Aorta (tissue), 5 donors: ENCODE measurements at regions of chrX and their contacts with region 1.

Region 1: DNA sequence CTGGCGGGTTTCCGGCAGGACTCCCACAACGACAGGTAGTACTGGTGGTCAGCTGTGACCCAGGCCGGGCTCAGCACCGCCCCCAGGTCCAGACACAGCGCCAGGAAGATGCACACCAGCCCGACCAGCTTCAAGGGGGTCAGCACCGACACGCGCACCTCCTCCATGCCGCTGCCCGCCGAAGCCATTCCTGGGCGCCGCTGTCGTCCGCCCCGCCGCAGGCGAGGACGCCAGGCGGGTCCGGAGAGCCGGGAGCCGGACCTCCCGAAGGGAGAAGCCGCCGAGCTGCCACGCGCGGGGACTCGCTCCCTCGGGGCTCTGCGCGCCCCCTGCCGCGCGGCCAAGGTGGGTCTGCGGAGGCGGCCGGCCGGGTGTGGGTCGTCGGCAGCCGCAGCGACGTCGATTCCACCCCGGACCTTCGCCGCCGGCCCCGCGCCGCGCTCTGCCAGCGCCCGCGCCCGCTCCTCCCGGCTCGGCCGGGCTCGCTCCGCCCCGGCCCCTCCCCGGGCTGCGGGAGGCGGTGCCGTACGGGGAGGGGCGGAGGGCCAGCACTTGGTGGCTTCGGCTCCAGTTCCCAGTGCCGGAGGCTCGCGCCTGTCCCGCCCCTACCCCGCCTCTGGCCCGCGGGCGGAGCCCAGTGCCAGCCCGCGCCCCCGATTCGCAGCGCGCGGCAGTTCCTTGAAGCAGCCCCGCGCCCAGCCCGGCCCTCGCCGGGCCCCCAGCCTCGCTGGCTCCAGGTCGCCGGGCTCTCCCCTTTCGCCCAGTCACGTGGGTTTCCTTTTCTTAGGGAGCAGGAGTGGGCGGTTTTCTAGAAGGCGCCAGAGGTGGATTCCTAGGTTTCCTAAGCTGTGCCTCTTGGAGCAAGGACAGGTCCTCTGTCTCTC is at the start of gene TMEM47:
- DNase-seq: peak; percentile 80 to 90
- ATAC-seq: peak; percentile 93
- H3K4me3 ChIP-seq: peak within 1 kb of the TSS; percentile 89 to 92
- H3K27ac ChIP-seq: peak within 1 kb of the TSS in 1 of 2 donors; percentile 86
- H3K4me1 ChIP-seq: no peaks in the 10 kb centered on the region
- H3K27me3 ChIP-seq: no peaks in the 10 kb centered on the region
- total RNA-seq, gene TMEM47: 123 to 287 TPM

Region 2: DNA sequence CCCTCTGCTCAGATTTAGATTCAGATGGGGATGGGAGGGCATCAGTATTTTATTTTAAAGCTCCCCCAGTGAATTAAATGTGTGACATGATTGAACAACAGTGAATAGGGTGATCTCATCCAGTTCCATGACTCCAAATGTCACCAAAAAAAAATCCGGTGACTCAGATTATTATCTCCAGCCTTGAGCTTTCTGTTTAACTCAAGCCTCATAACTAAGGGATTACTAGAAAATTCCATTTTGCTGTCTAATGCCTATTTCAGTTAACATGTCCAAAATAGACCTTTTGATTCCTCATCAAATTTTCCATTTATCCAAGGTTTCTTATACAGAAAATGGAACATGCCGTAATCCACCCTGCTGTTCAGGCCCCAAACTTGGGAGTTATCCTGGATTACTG is 121.9 kb after region 1 on chrX:
- intact Hi-C with region 1: loop called in 1 of 2 experiments (anchors 5 kb)
- DNase-seq: no peak
- ATAC-seq: peak; percentile 50
- H3K4me3 ChIP-seq: no peak overlapping the region
- H3K27ac ChIP-seq: peak overlapping the region in 1 of 2 donors; percentile 57
- H3K4me1 ChIP-seq: no peaks in the 10 kb centered on the region
- H3K27me3 ChIP-seq: no peaks in the 10 kb centered on the region

Region 3: DNA sequence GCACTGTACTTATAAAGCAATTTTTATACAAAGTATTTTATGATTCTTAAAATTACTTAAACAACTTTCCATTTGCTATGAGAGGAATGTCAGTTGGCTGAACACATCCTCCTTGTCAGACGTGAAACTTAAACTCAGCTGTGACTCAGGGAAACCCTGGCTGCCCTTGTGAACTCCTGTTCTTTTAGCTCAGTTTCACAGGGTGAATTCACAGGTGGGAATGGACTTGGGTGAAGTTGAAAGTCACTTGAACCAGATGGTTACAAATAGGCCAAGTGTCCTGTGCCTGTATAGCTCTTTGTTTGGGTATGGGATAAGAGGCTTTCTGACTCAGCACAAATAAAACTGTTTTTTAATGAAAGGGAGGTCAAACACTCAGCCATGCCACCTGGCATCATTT is 218.1 kb after region 1 on chrX:
- intact Hi-C with region 1: loop called (anchors 10 kb)
- DNase-seq: no peak
- ATAC-seq: no peak
- H3K4me3 ChIP-seq: no peak overlapping the region
- H3K27ac ChIP-seq: no peak overlapping the region
- H3K4me1 ChIP-seq: no peaks in the 10 kb centered on the region
- H3K27me3 ChIP-seq: no peaks in the 10 kb centered on the region

Region 4: DNA sequence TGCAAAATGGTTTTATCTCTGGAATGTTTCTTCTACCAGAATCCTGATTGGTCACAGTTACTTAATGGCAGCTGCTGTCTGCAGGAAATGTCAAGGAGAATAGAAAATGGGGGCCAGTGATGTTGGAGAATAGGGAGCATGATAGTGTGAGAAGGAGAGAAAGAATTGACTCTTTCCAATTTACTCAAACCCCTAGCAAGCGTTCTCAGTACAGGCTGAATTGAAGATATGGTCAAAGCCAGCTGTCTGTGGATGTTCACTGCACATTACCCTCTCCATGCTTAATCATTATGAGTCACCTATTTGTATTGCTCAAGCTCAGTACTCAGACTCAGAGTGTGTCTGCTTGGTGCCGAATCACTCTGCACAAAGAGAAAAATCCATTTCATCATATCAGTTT is 227.7 kb after region 1 on chrX:
- intact Hi-C with region 1: loop called in 1 of 2 experiments (anchors 10 kb)
- DNase-seq: no peak
- ATAC-seq: peak; percentile 59
- H3K4me3 ChIP-seq: no peak overlapping the region
- H3K27ac ChIP-seq: no peak overlapping the region
- H3K4me1 ChIP-seq: no peaks in the 10 kb centered on the region
- H3K27me3 ChIP-seq: no peaks in the 10 kb centered on the region